Posterior vena cava (tissue), 2 donors: ENCODE measurements at regions of chr4 and their contacts with region 1.

Region 1: DNA sequence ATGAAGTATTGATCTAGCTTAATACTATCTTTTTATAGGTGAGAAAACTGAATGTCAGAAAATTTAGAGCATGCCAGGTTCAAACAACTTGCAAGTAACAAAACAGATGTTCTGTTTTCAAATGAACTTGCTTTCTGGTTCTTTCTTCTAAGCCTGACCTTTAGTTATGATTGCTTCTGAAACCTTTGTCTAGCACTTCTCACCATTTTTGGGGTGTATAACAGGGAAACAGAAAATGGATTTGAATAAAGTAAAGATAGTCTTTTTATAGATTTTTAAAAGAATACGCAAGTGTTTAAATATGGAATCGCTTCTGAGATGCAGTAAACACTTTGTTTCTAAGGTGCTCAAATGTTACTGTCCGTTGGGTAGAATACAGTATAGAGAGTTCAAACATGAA is 687.2 kb upstream of the CPEB2 start:
- DNase-seq: no peak

Region 2: DNA sequence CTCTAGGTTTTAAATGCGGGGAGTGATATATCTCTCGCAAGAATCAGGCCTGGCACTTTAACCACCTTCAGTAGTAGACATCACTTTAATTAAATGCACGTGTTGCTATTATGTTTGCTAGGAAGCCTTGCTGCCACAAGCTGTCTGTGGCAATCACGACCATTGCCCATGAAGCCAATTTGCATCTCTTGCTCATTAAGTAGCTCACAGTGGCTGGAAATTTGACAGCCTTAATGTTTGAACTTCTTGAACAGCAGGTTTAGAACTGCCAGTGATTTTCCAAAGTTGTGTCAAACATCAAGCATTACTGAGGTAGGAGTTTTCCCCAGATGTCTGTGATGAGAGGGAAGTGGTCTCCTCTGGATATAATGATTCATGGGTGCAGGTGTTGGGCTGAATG is 44.9 kb after region 1 on chr4:
- intact Hi-C with region 1: loop called in 1 of 2 experiments (anchors 1 kb)
- DNase-seq: no peak

Region 3: DNA sequence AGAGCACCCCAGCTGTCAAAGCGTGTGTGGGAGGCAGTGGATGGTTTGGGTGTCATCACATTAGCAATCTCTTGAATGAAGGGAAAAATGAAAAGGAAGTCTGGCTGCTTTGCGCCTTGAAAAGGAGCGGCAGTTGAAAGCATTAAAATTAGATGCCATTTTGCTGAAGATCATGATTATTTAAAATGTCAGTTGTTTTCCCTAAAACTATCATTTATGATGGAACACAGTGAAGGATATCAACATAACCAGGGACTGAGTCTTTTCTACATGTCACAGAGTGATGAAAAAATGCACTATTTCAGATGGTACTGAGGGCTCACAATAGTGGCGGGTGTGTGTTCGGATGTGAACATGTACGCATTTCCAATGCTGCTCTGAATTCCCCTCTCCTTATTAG is 237.0 kb after region 1 on chr4:
- intact Hi-C with region 1: no loop called
- DNase-seq: no peak